ENCODE measurements at regions of chr14 and their contacts with region 1.

Region 1: GRCh38 chr14:71138448-71139293 is 231.4 kb downstream of the PCNX1 start:
- DNase-seq: peak; percentile 25
- H3K4me3 ChIP-seq: no peak overlapping the region
- H3K27ac ChIP-seq: no peak overlapping the region
- H3K27me3 ChIP-seq: no peaks in the 10 kb centered on the region
- CTCF ChIP-seq: peak; percentile 96

Region 2: DNA sequence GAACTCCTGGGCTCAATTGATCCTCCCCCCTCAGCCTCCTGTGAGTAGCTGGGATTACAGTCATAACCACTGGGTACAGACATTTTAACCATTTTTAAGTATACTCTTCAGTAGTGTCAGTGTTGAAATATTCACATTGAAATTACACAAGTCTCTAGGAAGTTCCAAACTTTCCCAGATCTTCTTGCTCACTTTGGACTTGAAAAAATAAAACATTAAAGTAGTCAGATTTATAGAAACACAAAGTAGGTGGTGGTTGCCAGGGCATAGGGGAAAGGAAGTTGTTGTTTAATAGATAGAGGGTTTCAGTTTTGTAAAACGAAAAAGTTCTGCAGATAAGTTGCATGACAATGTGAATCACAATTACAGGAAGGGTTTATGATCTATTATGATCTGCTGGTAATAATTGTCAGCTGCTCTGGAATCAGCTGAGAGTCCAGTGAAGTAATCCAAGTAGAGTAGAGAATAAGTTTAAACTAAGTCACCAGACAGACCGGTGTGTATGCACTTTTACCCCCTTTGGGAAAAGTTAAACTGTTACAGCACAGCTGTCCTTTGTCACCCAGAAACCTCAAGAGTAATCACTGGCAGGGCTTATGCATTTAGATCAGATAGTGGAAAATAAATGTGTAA is 204.1 kb before region 1 on chr14:
- in situ Hi-C with region 1: no loop called
- DNase-seq: no peak
- H3K4me3 ChIP-seq: no peak overlapping the region
- H3K27ac ChIP-seq: peak overlapping the region; percentile 5
- H3K27me3 ChIP-seq: no peaks in the 10 kb centered on the region
- CTCF ChIP-seq: no peak

Region 3: GRCh38 chr14:71187647-71188356 is 49.1 kb after region 1 on chr14:
- in situ Hi-C with region 1: no loop called
- DNase-seq: no peak
- H3K4me3 ChIP-seq: no peak overlapping the region
- H3K27ac ChIP-seq: no peak overlapping the region
- H3K27me3 ChIP-seq: no peaks in the 10 kb centered on the region
- CTCF ChIP-seq: no peak

Region 4: GRCh38 chr14:71339650-71340415 is 201.2 kb after region 1 on chr14:
- in situ Hi-C with region 1: no loop called
- DNase-seq: no peak
- H3K4me3 ChIP-seq: no peak overlapping the region
- H3K27ac ChIP-seq: no peak overlapping the region
- H3K27me3 ChIP-seq: no peaks in the 10 kb centered on the region
- CTCF ChIP-seq: no peak

Region 5: DNA sequence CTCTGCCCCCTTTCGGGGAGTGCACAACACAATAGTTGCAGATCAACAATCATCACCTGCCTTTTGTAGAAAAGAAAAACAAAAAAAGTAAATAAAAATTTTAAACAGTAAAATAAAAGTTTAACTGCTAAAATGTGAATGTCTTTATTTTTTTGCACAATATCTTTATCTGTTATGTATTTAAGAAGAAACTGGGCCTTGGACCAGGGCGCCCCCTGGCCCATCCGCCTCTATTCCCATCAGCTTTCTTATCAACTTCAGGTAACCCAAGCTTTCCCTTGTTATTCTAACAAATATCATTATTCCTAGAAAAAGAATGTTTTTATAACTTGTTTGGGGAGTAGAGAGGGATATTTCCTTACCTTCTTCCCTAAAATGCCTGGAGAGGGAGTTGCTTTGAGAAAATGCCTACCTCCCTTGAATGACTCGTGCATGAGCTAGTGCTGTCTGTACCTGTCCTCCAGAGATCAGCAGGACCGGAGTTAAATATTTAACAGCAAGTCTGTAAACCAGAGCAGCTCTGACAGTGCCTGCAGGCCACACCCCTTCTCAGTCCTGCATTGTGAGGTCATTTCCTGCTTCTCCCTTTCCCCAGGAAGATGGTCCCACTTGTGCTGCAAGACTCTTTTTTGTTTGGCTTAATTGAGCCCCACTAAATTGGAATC is 600.7 kb after region 1 on chr14:
- in situ Hi-C with region 1: loop called (anchors 25 kb)
- DNase-seq: no peak
- H3K4me3 ChIP-seq: no peak overlapping the region
- H3K27ac ChIP-seq: no peak overlapping the region
- H3K27me3 ChIP-seq: no peaks in the 10 kb centered on the region
- CTCF ChIP-seq: peak; percentile 40